ENCODE measurements at regions of chr4 and their contacts with region 1.

Region 1: DNA sequence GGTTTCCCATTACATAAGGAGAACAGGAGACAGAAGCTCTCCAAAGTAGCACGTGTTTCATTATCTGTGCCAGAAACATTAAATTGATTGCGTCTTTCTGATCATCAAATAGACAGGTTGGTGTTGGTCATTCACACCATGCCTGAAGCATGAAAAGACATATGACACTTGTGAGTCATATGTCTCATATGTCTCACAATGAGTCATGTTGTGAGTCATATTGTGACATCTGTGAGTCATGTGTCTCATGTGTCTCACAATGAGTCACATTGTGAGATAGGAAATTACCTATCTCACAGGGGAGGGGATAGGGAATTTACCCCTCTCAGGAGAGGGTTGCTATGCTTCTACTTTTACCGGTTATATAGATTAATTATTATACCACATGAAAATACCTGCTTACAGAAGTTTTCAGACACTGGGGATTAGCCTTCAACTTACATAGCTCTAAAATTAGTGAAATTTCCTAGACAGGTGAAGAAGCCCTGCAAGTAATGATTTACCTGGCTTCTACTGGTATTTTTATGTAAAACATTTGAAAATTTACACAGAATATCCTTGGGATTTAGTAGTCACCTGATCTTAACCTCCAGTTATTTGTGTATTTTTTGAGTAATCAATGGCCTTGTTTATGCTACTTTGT is 80.8 kb downstream of the NPFFR2 start:
- DNase-seq: peak; percentile 39
- ATAC-seq: no peak
- H3K4me3 ChIP-seq: no peak overlapping the region
- H3K27ac ChIP-seq: no peak overlapping the region
- H3K4me1 ChIP-seq: no peaks in the 10 kb centered on the region
- H3K27me3 ChIP-seq: no peaks in the 10 kb centered on the region
- CTCF ChIP-seq: no peak
- POLR2A ChIP-seq: no peak
- RAD21 ChIP-seq: no peak

Region 2: DNA sequence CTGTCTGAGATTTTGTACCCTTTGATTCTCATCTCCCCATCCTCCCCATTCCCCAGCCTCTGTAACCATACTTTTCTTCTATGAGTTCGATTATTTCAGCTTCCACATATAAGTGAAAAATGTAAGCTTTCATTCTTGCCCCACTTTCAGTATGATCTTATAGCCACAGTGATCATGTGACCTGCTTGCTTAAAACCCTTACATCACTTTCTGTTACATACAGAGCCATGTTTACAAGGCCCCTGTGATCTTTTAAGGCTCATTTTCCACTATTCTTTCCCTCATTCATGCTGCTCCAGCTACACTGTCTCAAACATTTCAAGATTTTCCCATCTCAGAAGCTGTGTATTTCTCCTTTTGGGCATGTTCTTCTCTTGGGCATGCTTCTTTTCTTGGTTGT is 971.5 kb before region 1 on chr4:
- CTCF ChIA-PET with region 1: no interaction called
- POLR2A ChIA-PET with region 1: no interaction called
- RAD21 ChIA-PET with region 1: no interaction called
- intact Hi-C with region 1: no loop called
- DNase-seq: no peak
- ATAC-seq: no peak
- H3K4me3 ChIP-seq: no peak overlapping the region
- H3K27ac ChIP-seq: no peak overlapping the region
- H3K4me1 ChIP-seq: no peaks in the 10 kb centered on the region
- H3K27me3 ChIP-seq: no peaks in the 10 kb centered on the region
- CTCF ChIP-seq: no peak
- POLR2A ChIP-seq: no peak
- RAD21 ChIP-seq: no peak

Region 3: GRCh38 chr4:72094059-72094797 is 18.4 kb before region 1 on chr4:
- CTCF ChIA-PET with region 1: no interaction called
- POLR2A ChIA-PET with region 1: no interaction called
- RAD21 ChIA-PET with region 1: no interaction called
- intact Hi-C with region 1: loop called (anchors 1 kb)
- DNase-seq: no peak
- ATAC-seq: no peak
- H3K4me3 ChIP-seq: no peak overlapping the region
- H3K27ac ChIP-seq: no peak overlapping the region
- H3K4me1 ChIP-seq: no peaks in the 10 kb centered on the region
- H3K27me3 ChIP-seq: no peaks in the 10 kb centered on the region
- CTCF ChIP-seq: no peak
- POLR2A ChIP-seq: no peak
- RAD21 ChIP-seq: no peak

Measured in HCT116 (cell line).